ENCODE measurements at regions of chr9 and their contacts with region 1.

Region 1: DNA sequence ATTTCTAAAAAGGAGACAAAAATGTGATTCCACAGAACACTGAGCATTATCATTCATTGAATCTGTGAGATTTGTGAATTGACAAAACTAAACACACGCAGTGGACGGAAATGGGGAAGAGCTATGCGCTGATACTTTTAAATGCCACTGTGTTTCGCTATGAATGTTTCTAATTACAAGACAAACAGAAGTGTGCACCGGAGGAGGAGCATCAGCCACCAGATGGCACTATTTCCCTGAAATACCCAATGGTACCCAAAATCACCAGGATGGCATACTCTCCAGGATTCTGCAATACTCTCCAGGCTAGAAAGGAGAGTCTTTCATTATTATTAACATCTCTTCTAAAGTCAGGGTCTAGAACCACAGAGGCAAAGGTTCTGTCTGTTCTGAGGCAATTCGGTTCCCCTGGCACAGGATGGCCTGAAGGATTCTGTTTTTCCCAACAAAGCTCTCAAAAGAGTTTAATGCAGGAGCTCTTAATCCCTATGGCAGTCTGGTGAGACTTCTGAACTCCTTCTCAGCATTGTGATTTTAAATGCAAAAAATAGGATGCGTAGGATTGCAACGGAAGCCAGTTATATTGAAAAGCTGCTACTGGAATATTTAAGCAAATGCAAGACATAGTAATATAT is 13.8 kb upstream of the PUM3 start:
- DNase-seq: peak; percentile 70 to 71
- ATAC-seq: peak; percentile 91 to 95
- H3K4me3 ChIP-seq: no peak overlapping the region
- H3K27ac ChIP-seq: no peak overlapping the region
- H3K4me1 ChIP-seq: no peaks in the 10 kb centered on the region
- CTCF ChIP-seq: peak; percentile 91
- EP300 ChIP-seq: no peak
- POLR2A ChIP-seq: no peak
- RAD21 ChIP-seq: peak; percentile 80 to 82

Region 2: DNA sequence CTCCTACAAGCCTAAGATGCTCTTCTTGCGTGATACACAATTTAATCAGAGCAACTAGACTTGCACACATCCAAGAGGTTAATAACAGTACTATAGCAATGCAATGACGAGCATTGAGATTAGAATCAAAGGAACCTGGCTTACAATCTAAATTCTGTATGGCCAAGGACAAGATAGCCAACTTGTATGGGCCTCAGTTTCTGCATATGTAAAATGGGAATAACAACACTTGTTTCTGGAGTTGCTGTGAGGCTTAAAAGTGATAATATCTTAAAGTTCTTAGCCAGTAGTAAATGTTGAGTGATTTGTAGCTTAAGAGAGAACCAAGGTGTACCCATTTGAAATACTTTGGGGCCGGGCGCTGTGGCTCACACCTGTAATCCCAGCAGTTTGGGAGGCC is 11.6 kb before region 1 on chr9:
- CTCF ChIA-PET with region 1: interaction called, 15 read pairs
- POLR2A ChIA-PET with region 1: interaction called, 3 read pairs
- DNase-seq: no peak
- ATAC-seq: no peak
- H3K4me3 ChIP-seq: no peak overlapping the region
- H3K27ac ChIP-seq: no peak overlapping the region
- H3K4me1 ChIP-seq: peaks cover 22% of the 10 kb centered on the region
- CTCF ChIP-seq: no peak
- EP300 ChIP-seq: no peak
- POLR2A ChIP-seq: no peak
- RAD21 ChIP-seq: no peak

Region 3: GRCh38 chr9:2872257-2872935 is 14.7 kb after region 1 on chr9:
- CTCF ChIA-PET with region 1: interaction called, 44 read pairs
- POLR2A ChIA-PET with region 1: no interaction called
- DNase-seq: peak in 1 of 2 experiments; percentile 45
- ATAC-seq: peak; percentile 73 to 81; a peak in 5 of 6 replicates
- H3K4me3 ChIP-seq: no peak overlapping the region
- H3K27ac ChIP-seq: no peak overlapping the region
- H3K4me1 ChIP-seq: no peaks in the 10 kb centered on the region
- CTCF ChIP-seq: peak; percentile 60
- EP300 ChIP-seq: no peak
- POLR2A ChIP-seq: no peak
- RAD21 ChIP-seq: peak; percentile 60 to 69

Region 4: GRCh38 chr9:3181049-3181953 is 323.6 kb after region 1 on chr9:
- CTCF ChIA-PET with region 1: interaction called, 12 read pairs
- POLR2A ChIA-PET with region 1: no interaction called
- DNase-seq: peak; percentile 8 to 48
- ATAC-seq: peak; percentile 75 to 89
- H3K4me3 ChIP-seq: peak overlapping the region; percentile 31; the same call in 2 of the 3 replicates
- H3K27ac ChIP-seq: no peak overlapping the region
- H3K4me1 ChIP-seq: no peaks in the 10 kb centered on the region
- CTCF ChIP-seq: peak; percentile 46
- EP300 ChIP-seq: no peak
- POLR2A ChIP-seq: no peak
- RAD21 ChIP-seq: peak; percentile 59 to 60

Region 5: DNA sequence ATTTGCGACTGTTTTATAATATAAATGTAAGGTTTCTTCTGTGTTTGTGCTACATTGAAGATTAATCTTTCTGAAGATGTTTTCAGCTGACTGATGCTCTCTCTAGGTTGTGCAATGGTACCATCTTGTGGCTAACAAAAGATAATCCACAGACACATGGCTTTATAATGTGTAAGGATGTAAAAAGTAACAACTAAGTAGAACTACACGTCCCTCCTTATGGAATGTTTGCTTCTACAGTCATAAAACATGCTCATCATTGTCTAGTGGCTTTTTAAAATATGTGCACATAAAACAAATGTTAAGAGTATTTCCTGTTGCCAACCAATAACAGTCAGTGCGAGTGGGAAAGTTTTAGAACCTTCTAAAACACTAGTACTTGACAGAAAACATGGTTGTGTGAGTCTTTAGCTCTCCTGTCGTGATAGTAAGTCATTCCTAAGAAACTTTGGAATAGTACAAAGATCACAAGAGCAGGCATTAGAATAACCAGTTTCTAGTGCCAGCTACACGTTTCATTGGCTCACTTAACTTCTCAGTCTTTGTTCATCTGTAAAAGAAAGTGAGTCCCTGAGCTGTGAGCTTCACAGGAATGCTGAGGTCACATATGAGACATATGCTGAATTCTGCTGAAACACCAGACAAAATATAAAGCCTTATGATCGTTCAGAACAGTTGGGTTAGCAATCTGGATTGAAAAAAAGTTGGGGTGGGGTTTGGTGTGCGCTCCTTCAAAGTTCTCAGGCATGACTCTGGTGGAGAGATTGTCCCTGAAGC is 1517.9 kb after region 1 on chr9:
- CTCF ChIA-PET with region 1: interaction called, 63 read pairs
- POLR2A ChIA-PET with region 1: no interaction called
- DNase-seq: peak; percentile 52 to 59
- ATAC-seq: peak; percentile 79 to 90; a peak in 5 of 6 replicates
- H3K4me3 ChIP-seq: no peak overlapping the region
- H3K27ac ChIP-seq: no peak overlapping the region
- H3K4me1 ChIP-seq: no peaks in the 10 kb centered on the region
- CTCF ChIP-seq: peak; percentile 90
- EP300 ChIP-seq: no peak
- POLR2A ChIP-seq: no peak
- RAD21 ChIP-seq: peak; percentile 90 to 94

Region 6: GRCh38 chr9:4382722-4383317 is 1525.1 kb after region 1 on chr9:
- CTCF ChIA-PET with region 1: interaction called, 63 read pairs
- POLR2A ChIA-PET with region 1: no interaction called
- DNase-seq: peak in 1 of 2 experiments; percentile 28
- ATAC-seq: peak in 1 of 2 experiments; percentile 72; a peak in 3 of 6 replicates
- H3K4me3 ChIP-seq: no peak overlapping the region
- H3K27ac ChIP-seq: no peak overlapping the region
- H3K4me1 ChIP-seq: no peaks in the 10 kb centered on the region
- CTCF ChIP-seq: peak; percentile 70
- EP300 ChIP-seq: no peak
- POLR2A ChIP-seq: no peak
- RAD21 ChIP-seq: peak; percentile 82 to 84

Measured in A549 (cell line).